ENCODE measurements at regions of chr2 and their contacts with region 1.

Region 1: DNA sequence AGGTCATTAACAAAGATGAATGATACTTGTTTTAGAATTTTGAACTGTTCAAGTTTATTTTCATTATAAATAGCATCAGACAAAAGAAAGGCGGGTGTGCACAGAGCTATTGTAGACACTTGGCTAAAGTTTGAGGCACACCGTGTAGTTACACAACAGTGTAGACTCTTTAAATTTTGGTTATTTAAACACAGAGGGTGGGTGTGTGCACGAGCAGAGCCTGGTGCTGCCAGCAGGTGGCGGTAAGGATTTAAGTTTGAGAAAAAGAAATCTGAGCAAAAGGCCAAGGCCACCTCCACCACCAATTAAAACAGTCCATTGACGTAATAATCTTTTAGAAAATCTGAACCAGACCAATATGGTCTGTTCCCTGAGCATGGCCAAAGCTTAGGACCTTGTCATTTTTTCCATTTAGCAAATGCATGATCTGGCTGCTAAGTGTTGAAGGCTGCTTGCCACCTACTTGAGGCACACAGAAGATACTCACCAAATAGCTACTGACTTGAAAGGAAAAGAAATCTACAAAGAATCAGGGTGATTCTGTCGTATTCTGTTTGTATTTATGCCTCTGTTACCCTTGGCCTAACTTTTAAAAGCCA is 14.3 kb downstream of the COPS7B start:
- DNase-seq: no peak
- H3K4me3 ChIP-seq: no peak overlapping the region
- CTCF ChIP-seq: peak; percentile 55

Region 2: DNA sequence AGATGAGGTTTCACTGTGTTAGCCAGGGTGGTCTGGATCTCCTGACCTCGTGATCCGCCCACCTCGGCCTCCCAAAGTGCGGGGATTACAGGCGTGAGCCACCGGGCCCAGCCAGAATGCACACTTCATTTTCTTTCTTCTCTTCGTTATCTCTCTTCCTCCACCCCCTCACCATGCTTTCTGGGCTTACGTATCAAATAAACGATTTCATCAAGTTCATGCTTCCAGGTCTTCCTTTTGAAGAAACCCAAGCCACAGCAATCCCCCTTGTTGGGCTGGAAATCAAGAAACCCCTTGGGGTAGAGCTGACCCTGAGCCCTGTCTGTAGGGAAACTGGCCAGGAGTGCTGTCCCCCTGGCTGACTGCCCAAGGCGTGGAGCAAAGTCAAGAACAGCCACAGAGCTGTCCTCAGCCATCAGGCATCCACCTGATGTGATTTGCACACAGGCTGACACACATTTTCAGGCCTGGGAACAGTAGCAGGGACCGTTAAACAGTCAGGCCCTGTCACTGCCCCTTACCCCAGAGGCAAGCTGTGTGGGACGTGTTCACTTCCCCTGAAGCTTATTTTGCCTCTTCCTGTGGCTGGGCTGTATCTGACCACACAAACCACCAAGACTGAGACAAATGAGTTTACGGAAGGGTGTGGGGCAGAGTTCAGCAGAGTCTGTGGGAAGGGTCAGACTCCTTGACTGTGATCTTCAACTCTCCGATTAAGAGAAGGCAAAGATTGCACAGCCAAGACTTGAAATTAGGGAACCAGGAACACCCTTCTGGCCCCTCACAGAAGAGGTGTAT is 255.3 kb before region 1 on chr2:
- CTCF ChIA-PET with region 1: no interaction called
- POLR2A ChIA-PET with region 1: no interaction called
- DNase-seq: no peak
- H3K4me3 ChIP-seq: no peak overlapping the region
- CTCF ChIP-seq: no peak

Region 3: DNA sequence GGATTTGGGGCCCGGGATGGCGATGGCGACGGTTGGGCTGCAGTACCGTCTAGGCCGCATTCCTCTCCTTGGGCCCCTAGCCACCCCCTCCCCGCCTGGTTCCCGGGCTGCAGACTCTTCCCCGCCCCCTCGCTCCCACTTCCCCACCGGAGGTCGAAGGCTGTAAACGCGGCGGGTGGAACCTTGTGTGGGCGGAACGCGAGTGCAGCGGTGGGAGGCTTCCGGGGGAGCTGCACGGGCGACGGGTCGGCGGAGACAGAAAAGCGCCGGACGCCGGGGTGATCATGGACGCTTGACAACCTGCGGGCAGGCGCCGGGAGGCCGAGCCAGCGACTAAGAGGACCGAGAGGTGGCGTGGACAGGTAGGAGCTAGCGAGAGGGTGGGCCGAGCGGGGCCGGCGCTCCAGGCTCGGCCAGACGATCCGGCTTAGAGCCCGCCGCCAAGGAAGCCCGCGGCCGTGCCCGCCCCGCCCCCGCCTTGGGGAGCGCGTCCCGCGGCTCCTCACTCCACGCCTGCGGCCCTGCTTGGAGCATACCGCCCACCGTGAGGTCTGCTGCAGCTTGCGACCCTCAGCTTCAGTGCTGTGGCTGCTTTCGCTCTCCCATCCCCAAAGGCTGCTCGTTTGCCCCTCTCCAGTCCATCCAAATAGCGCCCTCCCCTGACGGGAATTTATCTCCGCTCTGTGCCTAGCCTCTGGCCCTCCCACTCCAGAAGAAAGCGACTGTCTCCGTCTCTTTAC is 14.2 kb before region 1 on chr2 and contains the start of gene COPS7B:
- CTCF ChIA-PET with region 1: interaction called, 74 read pairs
- POLR2A ChIA-PET with region 1: no interaction called
- DNase-seq: no peak
- H3K4me3 ChIP-seq: peak within 1 kb of the TSS; percentile 99
- CTCF ChIP-seq: peak; percentile 56

Region 4: GRCh38 chr2:231810905-231811304 is 10.3 kb after region 1 on chr2:
- CTCF ChIA-PET with region 1: interaction called, 31 read pairs
- POLR2A ChIA-PET with region 1: no interaction called
- DNase-seq: peak; percentile 31
- H3K4me3 ChIP-seq: no peak overlapping the region
- CTCF ChIP-seq: no peak

Measured in AG04449 (cell line).